Left cardiac atrium (tissue), 4 donors: ENCODE measurements at regions of chr7 and their contacts with region 1.

Region 1: GRCh38 chr7:154927624-154928143 is 75.2 kb downstream of the PAXIP1 start:
- DNase-seq: peak; percentile 82
- ATAC-seq: peak; percentile 88 to 89

Region 2: GRCh38 chr7:154512121-154512833 is 415.4 kb before region 1 on chr7:
- intact Hi-C with region 1: no loop called
- DNase-seq: no peak
- ATAC-seq: no peak

Region 3: DNA sequence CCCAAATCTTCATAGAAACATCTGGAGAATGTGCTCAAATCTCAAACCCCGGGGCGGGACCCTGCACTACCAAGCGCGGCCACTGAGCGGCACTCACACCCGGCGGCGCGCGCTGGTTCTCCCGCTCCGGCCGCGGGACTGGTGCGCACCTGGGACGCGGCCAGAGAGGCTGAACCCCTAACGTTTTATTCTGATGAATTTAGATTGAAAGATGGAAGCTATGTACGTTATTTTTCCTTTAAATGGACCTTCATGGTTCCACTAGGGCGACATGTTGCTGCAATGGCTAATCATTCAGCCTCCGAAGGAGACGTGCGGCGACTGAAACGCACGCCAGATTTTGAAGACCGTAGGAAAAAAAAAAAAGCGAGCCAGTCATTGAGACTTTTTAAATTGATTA is 263.0 kb after region 1 on chr7:
- intact Hi-C with region 1: loop called (anchors 10 kb)
- DNase-seq: peak; percentile 49
- ATAC-seq: peak; percentile 75 to 76

Region 4: GRCh38 chr7:155344600-155345433 is 417.1 kb after region 1 on chr7:
- intact Hi-C with region 1: loop called (anchors 2 kb)
- DNase-seq: peak; percentile 79
- ATAC-seq: peak; percentile 99

Region 5: DNA sequence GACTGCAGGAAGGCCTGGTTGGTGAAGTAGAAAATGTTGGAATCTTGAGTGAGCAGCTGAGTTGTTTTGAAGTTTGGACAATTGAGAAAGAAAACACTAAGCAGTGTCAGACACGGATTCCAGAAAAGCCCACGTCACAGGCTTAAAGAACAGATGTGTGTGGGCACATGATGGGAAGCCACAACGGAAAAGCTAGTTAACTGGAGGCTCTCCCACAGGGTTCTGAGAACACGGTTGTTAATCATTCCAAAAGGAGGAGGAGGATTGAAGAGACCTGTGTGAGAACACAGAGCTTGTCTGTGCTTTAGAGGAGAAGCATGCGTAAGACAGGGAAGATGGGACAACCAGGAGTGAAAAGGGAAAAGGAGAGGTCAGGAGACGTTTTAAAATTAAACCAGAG is 842.0 kb after region 1 on chr7:
- intact Hi-C with region 1: loop called in 1 of 2 experiments (anchors 5 kb)
- DNase-seq: no peak
- ATAC-seq: no peak